ENCODE measurements at regions of chr16 and their contacts with region 1.

Region 1: DNA sequence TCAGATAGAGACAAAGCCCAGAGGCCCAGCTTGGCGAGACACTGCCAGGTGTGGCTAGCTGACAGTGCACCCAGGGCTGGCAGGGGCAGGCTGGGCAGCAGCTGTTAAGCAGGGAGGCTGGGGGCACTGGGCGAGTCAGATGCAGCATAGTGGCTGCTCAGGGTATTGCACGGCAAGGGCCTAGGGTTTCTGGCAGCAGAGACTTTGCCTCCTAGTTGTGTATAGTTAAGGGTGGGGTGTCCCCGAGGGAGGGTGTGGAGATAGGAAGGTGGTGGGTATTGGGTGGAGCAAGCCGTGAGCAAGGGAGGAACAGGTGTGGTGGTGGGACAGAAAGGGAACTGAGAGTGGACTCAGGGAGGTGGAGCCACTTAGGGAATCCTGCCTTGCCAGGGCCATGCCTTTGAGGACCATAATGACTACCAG is 66.0 kb downstream of the SMPD3 start:
- DNase-seq: no peak
- H3K4me3 ChIP-seq: no peak overlapping the region
- H3K27ac ChIP-seq: no peak overlapping the region
- H3K4me1 ChIP-seq: no peaks in the 10 kb centered on the region
- H3K27me3 ChIP-seq: no peaks in the 10 kb centered on the region
- CTCF ChIP-seq: peak in 1 of 2 donors; percentile 30

Region 2: DNA sequence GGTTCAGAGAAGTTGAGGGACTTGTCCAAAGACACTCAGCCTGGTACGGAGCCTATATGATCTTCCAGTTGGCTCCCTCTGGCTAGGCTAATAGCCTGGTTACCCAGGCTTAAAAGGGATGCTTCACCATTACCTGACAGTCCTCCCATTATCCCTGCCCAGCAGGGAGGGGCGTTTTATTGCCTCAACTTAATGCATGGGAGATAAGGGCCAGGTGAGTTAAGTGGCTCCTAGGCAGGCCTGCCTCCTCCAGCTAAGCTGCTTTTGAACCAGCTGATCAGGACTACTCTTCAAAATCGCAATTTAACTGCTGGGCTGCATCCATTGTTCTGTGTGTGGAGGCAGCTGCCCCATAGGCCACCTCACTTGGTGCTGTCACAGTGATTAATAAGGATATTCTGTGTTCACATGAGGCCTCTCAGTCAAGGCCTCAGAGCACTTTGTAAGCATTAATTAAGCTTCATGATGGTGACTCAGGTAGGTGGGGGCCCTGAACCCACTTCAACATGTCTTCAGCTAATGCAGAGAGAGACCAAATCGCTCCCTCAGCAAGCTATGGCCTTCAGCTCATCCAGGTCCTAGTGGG is 38.2 kb after region 1 on chr16:
- CTCF ChIA-PET with region 1: no interaction called
- dilution Hi-C with region 1: loop called (anchors 5 kb)
- in situ Hi-C with region 1: no loop called
- intact Hi-C with region 1: no loop called
- DNase-seq: no peak
- H3K4me3 ChIP-seq: no peak overlapping the region
- H3K27ac ChIP-seq: no peak overlapping the region
- H3K4me1 ChIP-seq: peaks cover 8% of the 10 kb centered on the region
- H3K27me3 ChIP-seq: no peaks in the 10 kb centered on the region
- CTCF ChIP-seq: no peak

Measured in mammary epithelial cell (primary cell).